ENCODE measurements at regions of chr12 and their contacts with region 1.

Region 1: GRCh38 chr12:104286538-104287482 is 16.7 kb upstream of the EID3 start:
- DNase-seq: peak; percentile 94
- H3K4me3 Mint-ChIP-seq: peak overlapping the region; percentile 97
- H3K27ac Mint-ChIP-seq: peak overlapping the region; percentile 99
- H3K4me1 Mint-ChIP-seq: peaks cover 26% of the 10 kb centered on the region
- H3K27me3 Mint-ChIP-seq: no peaks in the 10 kb centered on the region

Region 2: DNA sequence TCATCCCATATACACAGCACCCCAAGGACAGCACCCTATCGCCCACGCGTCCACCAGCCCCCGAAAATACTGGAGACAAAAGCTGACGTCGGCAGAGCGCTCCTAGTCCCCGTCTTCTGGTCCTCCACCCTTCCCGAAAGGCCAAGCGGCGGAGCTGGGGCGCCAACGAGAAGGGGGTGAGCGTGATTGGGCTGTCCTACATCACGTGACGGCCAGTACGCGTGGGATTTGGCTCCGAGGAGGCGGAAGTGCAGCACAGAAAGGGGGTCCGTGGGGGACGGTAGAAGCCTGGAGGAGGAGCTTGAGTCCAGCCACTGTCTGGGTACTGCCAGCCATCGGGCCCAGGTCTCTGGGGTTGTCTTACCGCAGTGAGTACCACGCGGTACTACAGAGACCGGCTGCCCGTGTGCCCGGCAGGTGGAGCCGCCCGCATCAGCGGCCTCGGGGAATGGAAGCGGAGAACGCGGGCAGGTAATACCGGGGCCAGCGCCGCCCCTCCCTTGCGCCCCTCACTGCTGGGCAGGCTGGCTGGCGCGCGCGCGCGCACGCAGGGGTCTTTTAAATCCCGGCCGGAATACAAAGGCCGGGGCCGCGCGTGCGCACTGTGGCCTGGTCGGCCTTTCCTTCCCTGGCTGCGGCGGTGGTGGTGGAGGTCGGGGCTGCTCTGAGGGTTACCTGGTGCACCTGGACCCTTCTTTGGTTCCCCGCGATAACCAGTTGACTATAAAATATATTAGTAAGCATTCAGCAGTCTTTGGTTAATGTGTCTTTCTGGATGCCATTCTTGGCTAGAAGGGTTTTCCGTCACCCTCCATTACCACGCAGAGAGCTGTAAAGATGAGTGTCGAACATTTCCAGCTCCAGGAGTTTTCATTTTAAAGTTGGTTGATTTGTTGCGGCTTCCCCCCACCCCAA is 321.0 kb before region 1 on chr12 and contains the start of gene TDG:
- CTCF ChIA-PET with region 1: interaction called, 6 read pairs
- POLR2A ChIA-PET with region 1: interaction called, 20 read pairs
- DNase-seq: peak; percentile 97
- H3K4me3 Mint-ChIP-seq: peak within 1 kb of the TSS; percentile 97
- H3K27ac Mint-ChIP-seq: peak within 1 kb of the TSS; percentile 91
- H3K4me1 Mint-ChIP-seq: peaks cover 60% of the 10 kb centered on the region
- H3K27me3 Mint-ChIP-seq: no peaks in the 10 kb centered on the region
- total RNA-seq, gene TDG: 33.0 to 34.4 TPM

Region 3: DNA sequence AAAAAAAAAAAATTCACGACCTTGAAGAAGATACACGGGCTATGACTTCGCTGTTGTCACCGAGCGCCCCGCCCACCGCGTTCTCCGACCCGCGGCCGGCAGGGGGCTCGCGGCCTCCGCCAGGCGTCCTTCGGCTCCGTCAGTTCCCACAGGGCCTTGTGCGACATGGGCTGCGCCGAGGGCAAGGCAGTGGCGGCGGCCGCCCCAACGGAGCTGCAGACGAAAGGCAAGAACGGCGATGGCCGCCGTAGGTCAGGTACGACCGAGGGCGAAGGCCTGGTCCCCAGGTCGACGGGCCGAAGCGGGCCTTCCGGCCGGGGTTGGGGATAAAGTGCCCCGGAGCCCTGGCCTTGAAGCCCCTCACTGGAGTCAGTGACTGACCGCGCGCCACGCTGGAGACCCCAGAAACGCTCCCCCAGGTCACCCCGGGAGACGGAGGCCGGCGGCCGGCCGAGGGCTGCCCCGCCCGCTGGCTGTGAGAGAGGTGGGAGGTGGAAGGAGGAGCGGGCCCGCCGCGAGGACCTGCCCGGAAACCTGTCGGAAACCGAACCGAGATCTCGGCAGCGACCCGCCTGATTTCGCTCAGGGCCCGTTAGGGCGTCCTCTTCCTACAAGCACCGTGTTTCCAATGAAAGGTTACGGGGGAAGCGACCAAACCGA is 71.0 kb before region 1 on chr12 and contains the start of gene TXNRD1:
- CTCF ChIA-PET with region 1: interaction called, 76 read pairs
- POLR2A ChIA-PET with region 1: interaction called, 93 read pairs
- DNase-seq: peak; percentile 87
- H3K4me3 Mint-ChIP-seq: peak within 1 kb of the TSS; percentile 76
- H3K27ac Mint-ChIP-seq: peak within 1 kb of the TSS; percentile 35
- H3K4me1 Mint-ChIP-seq: peaks cover 46% of the 10 kb centered on the region
- H3K27me3 Mint-ChIP-seq: peaks cover 6% of the 10 kb centered on the region
- total RNA-seq, gene TXNRD1: 108 to 112 TPM

Region 4: GRCh38 chr12:104276273-104277131 is 10.3 kb before region 1 on chr12:
- CTCF ChIA-PET with region 1: interaction called, 8 read pairs
- POLR2A ChIA-PET with region 1: interaction called, 33 read pairs
- DNase-seq: no peak
- H3K4me3 Mint-ChIP-seq: no peak overlapping the region
- H3K27ac Mint-ChIP-seq: peak overlapping the region; percentile 38
- H3K4me1 Mint-ChIP-seq: peaks cover 9% of the 10 kb centered on the region
- H3K27me3 Mint-ChIP-seq: peaks cover 11% of the 10 kb centered on the region

Region 5: DNA sequence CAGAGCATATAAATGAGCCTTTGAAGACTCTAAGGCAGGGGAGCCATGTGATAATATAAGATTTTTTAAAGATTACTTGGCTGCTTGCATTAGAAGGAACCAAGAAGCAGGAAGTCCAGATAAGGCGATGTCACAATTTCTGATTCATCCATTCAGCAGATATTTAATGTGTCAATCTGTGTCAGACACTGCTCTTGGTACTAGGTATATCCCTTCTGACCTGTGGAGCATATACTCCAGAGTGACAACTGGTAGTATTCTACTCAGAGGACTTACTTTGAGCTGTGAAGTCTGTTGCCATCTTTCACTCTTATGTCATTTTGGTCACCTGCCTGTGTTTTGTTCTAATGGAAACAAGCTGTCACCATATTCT is 27.4 kb after region 1 on chr12:
- CTCF ChIA-PET with region 1: interaction called, 9 read pairs
- POLR2A ChIA-PET with region 1: interaction called, 10 read pairs
- DNase-seq: no peak
- H3K4me3 Mint-ChIP-seq: no peak overlapping the region
- H3K27ac Mint-ChIP-seq: peak overlapping the region; percentile 62
- H3K4me1 Mint-ChIP-seq: peaks cover 14% of the 10 kb centered on the region
- H3K27me3 Mint-ChIP-seq: no peaks in the 10 kb centered on the region